ENCODE measurements at regions of chr12 and their contacts with region 1.

Region 1: GRCh38 chr12:117143008-117143532 is 43.9 kb upstream of the TESC start:
- DNase-seq: no peak
- ATAC-seq: peak; percentile 70
- H3K4me3 Mint-ChIP-seq: no peak overlapping the region
- H3K27ac Mint-ChIP-seq: peak overlapping the region; percentile 77
- H3K4me1 Mint-ChIP-seq: peaks cover 22% of the 10 kb centered on the region
- H3K27me3 Mint-ChIP-seq: no peaks in the 10 kb centered on the region
- CTCF ChIP-seq: no peak

Region 2: GRCh38 chr12:116784238-116784612 is 358.8 kb before region 1 on chr12:
- CTCF ChIA-PET with region 1: no interaction called
- POLR2A ChIA-PET with region 1: no interaction called
- intact Hi-C with region 1: no loop called
- DNase-seq: no peak
- ATAC-seq: no peak
- H3K4me3 Mint-ChIP-seq: no peak overlapping the region
- H3K27ac Mint-ChIP-seq: no peak overlapping the region
- H3K4me1 Mint-ChIP-seq: peaks cover 1% of the 10 kb centered on the region
- H3K27me3 Mint-ChIP-seq: no peaks in the 10 kb centered on the region
- CTCF ChIP-seq: no peak

Region 3: GRCh38 chr12:117098361-117099217 is 44.5 kb before region 1 on chr12:
- CTCF ChIA-PET with region 1: no interaction called
- POLR2A ChIA-PET with region 1: interaction called, 6 read pairs
- intact Hi-C with region 1: loop called (anchors 2 kb)
- DNase-seq: peak; percentile 29
- ATAC-seq: peak; percentile 45
- H3K4me3 Mint-ChIP-seq: peak overlapping the region; percentile 79
- H3K27ac Mint-ChIP-seq: no peak overlapping the region
- H3K4me1 Mint-ChIP-seq: peaks cover 20% of the 10 kb centered on the region
- H3K27me3 Mint-ChIP-seq: peaks cover 14% of the 10 kb centered on the region
- CTCF ChIP-seq: no peak

Region 4: DNA sequence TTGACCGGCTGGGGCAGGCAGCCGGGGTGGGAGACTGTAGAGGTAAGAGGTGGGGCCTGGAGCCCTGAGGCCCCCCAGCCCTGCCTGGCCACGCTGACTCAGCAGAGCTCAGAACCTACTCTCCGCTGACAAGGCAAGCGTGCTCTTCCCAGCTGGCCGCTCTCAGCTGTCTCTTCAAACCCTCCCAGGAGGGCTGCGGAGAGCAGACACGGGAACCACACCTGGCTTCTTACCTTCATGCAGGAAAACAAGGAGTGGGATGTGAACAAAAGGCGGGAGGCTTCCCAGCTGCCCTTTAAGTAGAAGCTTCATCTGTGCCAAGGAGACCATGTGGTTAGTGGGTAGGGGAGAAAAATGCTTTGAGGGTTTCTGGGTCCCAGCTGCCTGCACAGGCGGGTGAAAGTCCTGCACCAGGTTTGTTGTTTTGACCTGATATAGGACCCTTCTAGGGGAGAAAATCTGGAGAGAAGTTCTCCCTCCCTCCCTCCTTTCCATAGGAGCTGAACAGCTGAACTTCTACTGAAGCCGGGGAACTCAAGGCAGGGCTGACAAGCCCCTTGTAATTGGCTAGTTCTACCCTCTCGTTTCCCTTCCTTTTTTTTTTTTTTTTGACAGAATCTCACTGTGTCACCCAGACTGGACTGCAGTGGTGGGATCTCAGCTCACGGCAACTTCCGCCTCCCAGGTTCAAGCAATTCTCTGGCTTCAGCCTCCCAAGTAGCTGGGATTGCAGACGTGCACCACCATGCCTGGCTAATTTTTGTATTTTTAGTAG is 31.1 kb before region 1 on chr12:
- CTCF ChIA-PET with region 1: no interaction called
- POLR2A ChIA-PET with region 1: no interaction called
- intact Hi-C with region 1: no loop called
- DNase-seq: no peak
- ATAC-seq: no peak
- H3K4me3 Mint-ChIP-seq: no peak overlapping the region
- H3K27ac Mint-ChIP-seq: no peak overlapping the region
- H3K4me1 Mint-ChIP-seq: peaks cover 3% of the 10 kb centered on the region
- H3K27me3 Mint-ChIP-seq: peaks cover 2% of the 10 kb centered on the region
- CTCF ChIP-seq: no peak

Region 5: GRCh38 chr12:117155278-117156060 is 12.4 kb after region 1 on chr12:
- CTCF ChIA-PET with region 1: no interaction called
- POLR2A ChIA-PET with region 1: no interaction called
- intact Hi-C with region 1: loop called (anchors 1 kb)
- DNase-seq: peak; percentile 57
- ATAC-seq: peak; percentile 86
- H3K4me3 Mint-ChIP-seq: no peak overlapping the region
- H3K27ac Mint-ChIP-seq: no peak overlapping the region
- H3K4me1 Mint-ChIP-seq: peaks cover 15% of the 10 kb centered on the region
- H3K27me3 Mint-ChIP-seq: no peaks in the 10 kb centered on the region
- CTCF ChIP-seq: peak; percentile 68

Measured in activated B cell treated with CpG ODN at 0.5 μM for 24 hours (primary cell).